Colonic mucosa (tissue), 4 donors: ENCODE measurements at regions of chr2 and their contacts with region 1.

Region 1: DNA sequence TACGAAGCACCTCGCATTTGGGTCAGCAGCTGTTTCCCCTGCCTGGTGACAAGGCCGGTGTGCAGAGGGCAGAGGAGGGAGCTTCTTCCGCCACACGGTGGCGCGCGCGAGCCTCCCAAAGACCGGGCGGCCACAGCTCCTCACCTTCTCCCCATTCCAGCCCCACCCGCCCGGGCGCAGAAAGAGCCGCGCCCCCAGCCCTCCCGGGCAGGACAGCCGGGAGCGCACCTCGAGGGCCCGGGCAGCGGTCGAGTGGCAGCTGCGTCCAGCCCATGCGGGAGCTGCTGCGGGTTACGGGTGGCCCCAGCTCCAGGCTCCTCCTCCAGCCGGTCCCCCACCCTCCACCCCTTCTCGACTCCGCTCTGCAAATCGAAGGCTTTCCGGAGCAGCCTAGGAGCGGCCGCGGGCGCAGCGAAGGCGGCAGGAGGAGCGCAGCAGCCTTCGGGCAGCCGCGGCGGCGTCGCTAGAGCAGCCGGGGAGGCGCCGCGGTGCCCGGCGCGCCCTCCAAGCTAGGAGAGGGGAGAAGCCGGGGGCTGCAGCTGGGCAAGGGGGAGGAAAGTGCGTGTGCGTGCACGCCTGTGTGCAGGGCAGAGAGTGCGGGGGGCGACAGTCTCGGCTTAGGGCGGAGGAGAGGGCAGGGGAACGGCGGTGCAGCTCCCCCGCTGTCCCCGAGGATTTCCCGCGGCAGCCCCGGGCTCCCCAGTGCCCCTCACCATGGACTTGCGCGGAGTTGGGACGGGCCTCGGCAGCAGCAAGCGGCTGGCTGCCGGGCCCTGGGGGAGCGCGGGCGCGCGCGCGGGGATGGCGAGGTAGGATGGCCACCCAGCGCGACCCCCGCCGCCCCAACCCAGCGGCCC is at the start of gene CCDC85A:
- DNase-seq: peak; percentile 87
- H3K4me3 ChIP-seq: peak within 1 kb of the TSS; percentile 57
- H3K27ac ChIP-seq: no peak within 1 kb of the TSS
- H3K4me1 ChIP-seq: peaks cover 3% of the 10 kb centered on the region
- H3K27me3 ChIP-seq: peaks cover 34% of the 10 kb centered on the region
- CTCF ChIP-seq: peak; percentile 84
- total RNA-seq, gene CCDC85A: 0.40 to 0.42 TPM

Region 2: GRCh38 chr2:56749152-56749752 is 565.4 kb after region 1 on chr2:
- intact Hi-C with region 1: loop called (anchors 2 kb)
- DNase-seq: no peak
- H3K4me3 ChIP-seq: no peak overlapping the region
- H3K27ac ChIP-seq: no peak overlapping the region
- H3K4me1 ChIP-seq: no peaks in the 10 kb centered on the region
- H3K27me3 ChIP-seq: no peaks in the 10 kb centered on the region
- CTCF ChIP-seq: peak; percentile 24

Region 3: DNA sequence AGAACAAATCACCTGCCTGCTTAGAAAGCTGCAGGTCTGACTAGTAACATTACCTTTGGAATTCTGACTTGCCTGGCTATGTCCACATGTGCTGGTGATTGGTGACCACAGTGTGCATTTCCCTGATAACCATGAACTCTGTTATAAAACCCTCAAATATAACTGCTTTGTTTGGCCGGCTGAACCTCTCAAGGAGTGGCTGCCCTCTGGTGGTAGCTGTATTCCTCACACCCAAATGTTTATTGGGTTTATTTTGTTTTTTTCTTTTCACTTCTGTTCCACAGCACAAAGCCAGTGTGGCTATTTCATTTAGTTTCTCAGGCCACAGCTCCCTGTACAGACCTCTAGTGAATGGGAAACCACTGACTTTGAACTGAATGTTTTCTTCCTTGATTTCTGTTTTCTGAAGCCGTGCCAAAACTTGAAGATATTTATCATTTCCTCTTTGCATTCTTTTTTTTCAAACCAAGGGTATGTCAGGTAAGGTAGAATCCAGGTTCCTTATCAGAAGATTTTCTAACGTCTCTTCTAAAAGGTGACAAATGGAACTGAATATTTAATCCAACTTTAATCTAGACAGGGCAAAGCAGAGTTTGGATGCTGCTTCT is 1313.7 kb after region 1 on chr2:
- intact Hi-C with region 1: loop called (anchors 5 kb)
- DNase-seq: peak; percentile 34
- H3K4me3 ChIP-seq: no peak overlapping the region
- H3K27ac ChIP-seq: no peak overlapping the region
- H3K4me1 ChIP-seq: no peaks in the 10 kb centered on the region
- H3K27me3 ChIP-seq: no peaks in the 10 kb centered on the region
- CTCF ChIP-seq: peak; percentile 62